ENCODE measurements at regions of chr10 and their contacts with region 1.

Region 1: DNA sequence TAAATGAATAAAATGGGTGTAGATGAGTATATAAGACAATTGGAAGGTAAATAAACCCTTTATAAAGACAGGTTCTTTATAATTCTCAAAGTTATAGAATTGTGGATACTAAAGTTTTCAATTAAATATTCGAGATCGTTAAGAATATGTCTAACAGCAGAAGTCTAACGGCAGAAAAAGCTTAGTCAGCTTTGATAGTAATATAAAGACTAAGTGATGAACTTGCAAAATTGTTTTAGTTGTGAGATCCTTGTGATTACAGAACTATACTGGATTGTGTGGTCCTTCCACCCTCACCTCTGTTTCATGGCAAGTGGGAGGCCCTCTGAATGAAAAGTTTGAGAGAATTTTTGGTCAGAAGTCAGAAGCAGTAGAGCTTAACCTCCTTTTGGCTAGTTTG is 2.3 kb downstream of the THNSL1 start:
- DNase-seq: no peak
- H3K4me3 ChIP-seq: no peak overlapping the region
- H3K27me3 ChIP-seq: no peaks in the 10 kb centered on the region
- CTCF ChIP-seq: no peak

Region 2: GRCh38 chr10:24701447-24701846 is 317.3 kb before region 1 on chr10:
- CTCF ChIA-PET with region 1: no interaction called
- POLR2A ChIA-PET with region 1: interaction called, 13 read pairs
- DNase-seq: no peak
- H3K4me3 ChIP-seq: no peak overlapping the region
- H3K27me3 ChIP-seq: no peaks in the 10 kb centered on the region
- CTCF ChIP-seq: no peak

Measured in BJ (cell line).